Activated T-helper 1 cell treated with anti-CD3 and anti-CD28 coated beads, Interleukin-12 subunit alpha, Interleukin-12 subunit beta, Interleukin-2, Interleukin-4 antibody, amounts not matched to agents 30 ng/mL and 10 ng/mL and 1 ng/mL, durations not matched to agents 14 hours and 24 hours and 36 hours (primary cell): ENCODE measurements at regions of chr9 and their contacts with region 1.

Region 1: DNA sequence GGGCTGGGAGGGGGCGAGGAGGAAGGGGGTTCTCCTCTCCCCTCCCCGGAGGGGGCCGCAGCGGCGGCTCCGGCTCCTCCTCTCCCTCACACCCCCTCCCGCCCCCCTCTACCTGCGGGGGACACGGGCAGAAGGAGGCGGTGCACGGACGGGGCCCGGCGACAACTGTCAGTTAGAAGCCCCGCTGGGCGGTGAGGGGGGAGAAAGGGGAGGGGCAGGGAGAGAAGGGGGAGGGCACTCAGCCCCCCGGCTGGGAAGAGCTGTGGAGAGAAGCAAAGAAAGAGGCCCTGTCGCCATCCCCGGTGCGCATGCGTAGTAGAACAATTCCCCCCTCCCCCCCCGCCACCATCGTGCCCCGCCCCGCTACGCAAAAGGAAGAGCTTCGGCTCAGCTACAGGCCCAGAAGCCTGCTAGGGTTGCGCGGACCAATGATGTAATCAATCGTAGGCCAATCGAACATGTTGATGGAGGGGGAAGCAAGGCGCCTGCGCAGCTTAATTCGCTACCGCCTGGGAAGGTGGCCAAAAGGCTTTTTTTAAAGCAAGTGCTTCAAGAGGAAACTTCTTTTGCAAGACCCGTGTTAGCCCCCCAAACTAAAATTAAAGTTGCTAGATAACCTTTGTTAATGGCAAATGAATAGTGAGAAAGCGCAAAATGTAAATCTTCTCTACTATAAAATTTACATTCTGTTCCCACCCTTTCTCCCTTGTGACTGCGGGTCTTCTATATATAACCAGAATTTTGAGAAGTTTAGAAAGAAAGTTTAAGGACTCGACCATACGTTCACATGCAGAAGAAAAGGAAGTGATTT is 7.0 kb downstream of the RANBP6 start:
- DNase-seq: peak; percentile 91
- H3K4me3 Mint-ChIP-seq: peak overlapping the region; percentile 73
- H3K27ac Mint-ChIP-seq: peak overlapping the region; percentile 65
- H3K4me1 Mint-ChIP-seq: peaks cover 62% of the 10 kb centered on the region
- H3K27me3 Mint-ChIP-seq: no peaks in the 10 kb centered on the region

Region 2: DNA sequence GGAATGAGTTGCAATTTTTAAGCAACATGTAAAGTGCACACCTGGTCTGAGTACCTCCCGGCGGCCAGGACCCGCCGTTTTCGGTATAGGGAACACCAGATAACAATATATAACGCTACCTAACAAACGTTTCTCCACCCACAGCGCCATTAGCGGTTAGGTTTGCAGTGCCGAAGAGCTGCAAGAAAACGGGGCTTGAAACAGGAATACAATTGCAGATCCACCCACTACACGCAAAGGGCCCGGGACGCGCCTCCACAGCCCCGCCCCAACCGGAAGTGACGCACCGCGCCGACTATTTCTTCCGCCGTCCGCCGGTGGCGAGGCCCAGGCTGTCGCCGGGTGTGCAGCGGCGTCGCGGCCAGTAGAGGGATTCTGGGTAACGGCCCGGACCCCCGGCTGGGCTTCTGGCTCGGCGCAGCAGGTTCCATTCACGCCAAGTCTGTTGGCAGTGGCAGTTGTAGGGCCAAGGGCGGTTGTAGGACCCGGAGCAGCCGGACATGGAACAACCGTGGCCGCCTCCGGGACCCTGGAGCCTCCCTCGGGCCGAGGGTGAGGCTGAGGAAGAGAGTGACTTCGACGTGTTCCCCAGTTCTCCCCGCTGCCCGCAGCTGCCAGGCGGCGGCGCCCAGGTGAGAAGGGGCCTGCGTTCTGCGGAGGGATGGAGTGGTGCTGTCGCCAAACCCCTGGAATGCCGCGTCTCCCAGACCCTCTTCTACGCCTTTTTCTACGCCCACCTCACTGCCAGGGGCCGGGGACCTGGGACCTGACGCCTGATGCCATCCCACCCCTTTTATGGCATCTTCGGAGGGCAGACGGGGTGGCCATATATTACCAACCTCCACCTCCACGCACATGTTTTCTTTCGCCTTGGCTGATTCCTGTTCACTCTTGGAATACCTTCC is 1328.9 kb before region 1 on chr9 and contains the start of gene CDC37L1:
- intact Hi-C with region 1: loop called (anchors 5 kb)
- DNase-seq: peak; percentile 98
- H3K4me3 Mint-ChIP-seq: no peak within 1 kb of the TSS
- H3K27ac Mint-ChIP-seq: no peak within 1 kb of the TSS
- H3K4me1 Mint-ChIP-seq: peaks cover 7% of the 10 kb centered on the region
- H3K27me3 Mint-ChIP-seq: no peaks in the 10 kb centered on the region
- total RNA-seq, gene CDC37L1: 11.1 and 11.3 TPM in 2 replicates

Region 3: GRCh38 chr9:5628530-5629311 is 379.7 kb before region 1 on chr9 and contains the start of gene RIC1:
- intact Hi-C with region 1: loop called (anchors 1 kb)
- DNase-seq: peak; percentile 90
- H3K4me3 Mint-ChIP-seq: peak within 1 kb of the TSS; percentile 99
- H3K27ac Mint-ChIP-seq: peak within 1 kb of the TSS; percentile 98
- H3K4me1 Mint-ChIP-seq: peaks cover 74% of the 10 kb centered on the region
- H3K27me3 Mint-ChIP-seq: no peaks in the 10 kb centered on the region
- total RNA-seq, gene RIC1: 20.9 and 22.3 TPM in 2 replicates

Region 4: DNA sequence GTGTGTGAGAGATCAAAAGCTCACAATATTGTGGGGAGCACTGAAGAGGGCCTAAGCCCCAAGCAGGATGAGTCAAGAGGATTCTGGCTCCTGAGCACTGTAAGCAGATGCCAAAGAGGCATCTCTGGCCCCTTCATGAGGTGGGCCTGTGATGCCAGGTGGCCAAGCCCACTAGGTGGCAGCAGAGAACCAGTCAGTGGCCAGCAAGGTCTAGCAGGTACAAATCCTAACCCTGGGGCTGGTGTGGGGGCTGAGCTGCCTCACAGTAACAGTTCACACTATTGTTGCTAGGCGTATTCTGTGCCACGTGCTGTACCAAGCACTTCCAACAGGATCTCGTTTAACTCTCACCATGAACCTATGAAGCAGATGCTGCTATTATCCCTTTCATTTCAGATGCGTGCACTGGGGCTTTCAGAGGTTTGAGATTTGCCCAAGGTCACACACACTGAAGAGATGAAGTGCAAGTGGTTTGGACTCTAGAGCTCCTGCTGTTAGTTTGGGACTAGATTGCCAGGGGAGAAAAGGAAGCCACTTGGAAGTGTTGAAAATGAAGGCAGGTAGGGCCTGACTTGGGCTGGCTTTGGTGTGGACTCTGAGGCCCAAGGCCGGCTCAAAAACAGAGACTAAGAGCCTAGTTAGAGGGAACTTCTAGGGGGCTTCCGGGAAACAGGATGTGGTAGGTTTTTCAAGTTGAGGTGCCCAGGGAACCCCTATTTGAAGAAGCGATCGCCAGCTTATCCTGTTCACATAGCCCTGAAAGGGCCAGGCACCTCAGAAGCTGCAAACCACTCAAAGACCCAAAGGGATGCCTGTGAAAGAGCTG is 122.0 kb before region 1 on chr9:
- intact Hi-C with region 1: loop called (anchors 2 kb)
- DNase-seq: peak; percentile 66
- H3K4me3 Mint-ChIP-seq: no peak overlapping the region
- H3K27ac Mint-ChIP-seq: peak overlapping the region; percentile 52
- H3K4me1 Mint-ChIP-seq: peaks cover 11% of the 10 kb centered on the region
- H3K27me3 Mint-ChIP-seq: no peaks in the 10 kb centered on the region

Region 5: GRCh38 chr9:5994493-5994892 is 13.9 kb before region 1 on chr9:
- intact Hi-C with region 1: loop called (anchors 1 kb)
- DNase-seq: no peak
- H3K4me3 Mint-ChIP-seq: no peak overlapping the region
- H3K27ac Mint-ChIP-seq: no peak overlapping the region
- H3K4me1 Mint-ChIP-seq: peaks cover 25% of the 10 kb centered on the region
- H3K27me3 Mint-ChIP-seq: no peaks in the 10 kb centered on the region

Region 6: DNA sequence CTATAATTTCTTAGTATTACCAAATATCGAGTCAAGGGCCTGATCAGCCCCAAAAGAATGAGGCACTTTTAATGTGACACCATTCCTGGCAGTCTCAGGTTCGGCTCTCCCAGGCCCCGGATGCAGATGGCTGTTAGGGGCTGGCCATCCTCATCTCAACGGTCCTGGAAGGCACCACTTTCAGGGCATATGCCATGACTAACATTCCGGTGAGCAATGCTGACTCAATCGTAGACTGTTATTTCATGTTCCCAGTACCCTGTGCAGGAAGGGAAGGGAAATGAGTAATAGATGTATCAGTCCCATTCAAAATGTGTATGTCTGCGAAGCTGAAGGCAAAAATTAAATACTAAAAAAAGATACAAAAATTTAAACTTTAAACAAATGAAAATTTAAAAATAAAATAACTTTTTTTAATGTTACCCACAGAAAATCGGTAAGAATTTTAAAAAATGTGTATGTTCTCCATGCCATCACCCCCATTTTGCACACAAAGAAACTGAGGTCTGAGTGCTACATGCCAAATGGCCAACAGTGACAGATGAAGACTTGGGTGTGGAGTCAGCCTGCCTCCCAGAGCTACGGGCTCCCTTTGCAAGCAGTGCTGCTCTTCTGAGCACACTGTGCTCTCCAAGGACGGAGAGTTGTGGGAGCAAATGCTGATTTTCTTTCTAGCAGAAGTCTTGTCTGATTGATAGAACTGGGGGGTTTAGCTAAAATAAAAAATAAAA is 558.2 kb after region 1 on chr9:
- intact Hi-C with region 1: loop called (anchors 2 kb)
- DNase-seq: peak; percentile 44
- H3K4me3 Mint-ChIP-seq: peak overlapping the region; percentile 57
- H3K27ac Mint-ChIP-seq: peak overlapping the region; percentile 80
- H3K4me1 Mint-ChIP-seq: peaks cover 26% of the 10 kb centered on the region
- H3K27me3 Mint-ChIP-seq: peaks cover 4% of the 10 kb centered on the region

Region 7: DNA sequence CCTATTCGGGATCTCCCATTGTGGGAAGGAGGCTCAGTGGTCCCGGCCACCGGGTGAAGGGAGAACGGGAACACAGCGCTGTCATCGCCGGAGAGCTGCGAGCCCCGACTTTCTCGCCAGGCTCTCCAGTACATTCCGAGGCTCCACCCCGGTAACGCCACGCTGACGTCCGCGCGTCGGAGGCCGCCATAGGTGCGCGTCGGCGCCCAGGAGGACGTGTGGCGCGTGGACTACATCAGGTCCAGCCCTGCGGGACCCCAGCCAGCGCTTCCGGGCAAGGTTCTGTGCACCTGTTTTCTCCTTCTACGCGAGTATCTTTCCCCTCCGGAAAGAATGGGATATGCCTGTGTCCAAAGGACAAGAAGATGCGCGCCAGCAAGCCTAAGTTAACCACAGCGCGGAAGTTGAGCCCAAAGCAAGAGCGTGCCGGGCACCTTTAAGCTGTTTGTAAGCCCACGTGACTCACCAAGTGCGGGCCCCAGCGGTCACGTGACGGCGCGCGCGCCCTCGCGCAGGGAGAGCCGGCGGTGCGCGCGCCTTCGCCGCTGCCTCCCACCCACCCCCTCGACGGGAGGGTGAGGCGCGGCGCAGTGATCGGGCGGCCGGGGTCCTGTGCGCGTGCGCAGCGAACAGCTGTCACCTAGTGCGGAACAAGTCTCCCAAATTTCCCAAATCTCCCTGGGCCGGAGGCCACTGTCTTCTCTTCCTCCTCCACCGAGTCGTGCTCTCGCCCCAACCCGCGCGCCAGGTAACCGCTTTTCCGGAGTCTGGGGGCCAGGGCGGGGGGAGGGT is 749.3 kb after region 1 on chr9 and contains the start of gene KDM4C:
- intact Hi-C with region 1: loop called (anchors 1 kb)
- DNase-seq: peak; percentile 91
- H3K4me3 Mint-ChIP-seq: peak within 1 kb of the TSS; percentile 99
- H3K27ac Mint-ChIP-seq: peak within 1 kb of the TSS; percentile 99
- H3K4me1 Mint-ChIP-seq: peaks cover 12% of the 10 kb centered on the region
- H3K27me3 Mint-ChIP-seq: no peaks in the 10 kb centered on the region
- total RNA-seq, gene KDM4C: 35.9 and 41.4 TPM in 2 replicates